RWPE1 (cell line): ENCODE measurements at regions of chr7 and their contacts with region 1.

Region 1: DNA sequence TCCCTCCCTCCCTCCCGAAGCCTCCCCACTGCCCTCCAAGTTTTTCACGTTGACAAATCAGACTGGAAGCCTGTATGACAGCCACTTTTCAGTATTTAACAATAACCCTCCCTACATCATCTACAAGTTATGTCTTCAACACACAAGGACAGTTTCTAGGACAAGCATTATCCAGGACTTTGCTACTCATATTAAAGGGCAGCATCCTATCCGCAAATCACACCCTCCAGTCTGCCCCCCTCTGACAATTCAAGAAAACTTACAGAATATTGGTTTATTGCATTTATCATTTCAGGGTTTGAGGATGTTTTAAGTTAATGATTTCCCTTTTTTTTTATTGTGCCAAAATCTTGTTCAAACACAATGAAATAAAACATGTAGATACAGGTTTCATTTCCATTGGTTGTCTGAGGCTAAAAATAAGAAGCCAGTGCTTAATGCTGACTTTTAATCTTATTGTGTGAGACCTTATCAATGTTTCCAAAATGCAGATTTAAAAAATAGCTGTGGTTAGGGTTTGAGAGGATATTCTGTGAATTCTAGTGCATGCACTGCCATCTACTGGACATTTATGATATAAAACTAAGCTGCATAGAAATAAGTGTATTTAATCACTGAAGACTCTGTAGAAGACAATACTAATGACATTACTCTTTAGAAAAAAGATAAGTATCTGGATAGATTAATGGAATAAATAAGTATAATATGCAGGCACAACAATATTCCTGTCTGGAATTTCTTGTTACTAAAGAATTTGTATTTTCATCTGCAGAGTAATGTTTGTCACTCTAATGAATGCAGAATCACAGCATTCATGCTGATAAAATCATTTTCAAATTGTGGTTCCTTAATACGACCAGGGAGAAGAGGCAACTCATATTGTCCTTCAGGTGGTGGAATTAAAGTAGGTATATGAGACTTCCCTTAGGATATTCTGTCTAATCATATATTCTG is 64.1 kb downstream of the CAV1 start:
- DNase-seq: peak; percentile 31
- H3K27ac ChIP-seq: no peak overlapping the region; the same call in 1 of the 2 replicates
- CTCF ChIP-seq: peak; percentile 84

Region 2: DNA sequence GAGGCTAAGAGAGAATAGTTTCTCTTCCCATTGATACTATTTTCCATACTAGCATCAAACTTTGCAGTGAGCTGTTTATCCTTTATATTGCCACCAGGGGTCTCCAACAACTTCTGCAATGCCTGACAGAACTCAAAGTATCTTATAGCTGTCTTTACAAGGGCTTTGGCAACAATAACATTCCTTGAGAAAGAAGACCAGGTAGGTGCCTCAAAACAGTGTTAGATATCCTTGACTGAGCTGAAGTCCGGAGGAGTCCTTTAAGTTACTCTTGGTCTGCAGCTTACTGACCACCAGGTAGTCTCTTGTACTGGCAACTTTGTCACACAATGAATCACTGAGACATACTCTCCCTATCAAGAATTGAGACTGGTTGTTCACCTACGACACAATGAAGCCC is 408.6 kb before region 1 on chr7:
- CTCF ChIA-PET with region 1: interaction called, 10 read pairs
- POLR2A ChIA-PET with region 1: no interaction called
- DNase-seq: peak; percentile 47
- H3K27ac ChIP-seq: no peak overlapping the region
- CTCF ChIP-seq: peak; percentile 89

Region 3: DNA sequence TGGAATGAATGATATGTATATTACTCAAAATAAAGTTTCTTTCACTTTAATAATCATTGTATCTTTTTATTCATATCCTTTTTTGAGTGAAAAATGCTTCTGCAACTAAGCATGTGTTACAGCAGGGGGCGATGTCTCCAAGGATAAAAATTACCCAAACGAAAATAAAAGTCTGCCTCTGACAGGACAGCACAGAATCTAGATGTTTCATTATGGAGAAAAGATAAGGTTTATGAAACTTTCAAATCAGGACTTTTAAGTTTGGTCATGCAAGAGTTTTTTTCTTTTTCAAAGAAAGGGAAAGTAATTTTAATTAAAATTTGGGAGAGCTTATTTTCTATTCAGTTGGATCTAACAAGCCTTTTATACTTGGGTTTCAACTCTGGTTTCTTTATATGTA is 330.2 kb before region 1 on chr7:
- CTCF ChIA-PET with region 1: interaction called, 15 read pairs
- POLR2A ChIA-PET with region 1: no interaction called
- DNase-seq: peak; percentile 50
- H3K27ac ChIP-seq: no peak overlapping the region
- CTCF ChIP-seq: peak; percentile 90

Region 4: DNA sequence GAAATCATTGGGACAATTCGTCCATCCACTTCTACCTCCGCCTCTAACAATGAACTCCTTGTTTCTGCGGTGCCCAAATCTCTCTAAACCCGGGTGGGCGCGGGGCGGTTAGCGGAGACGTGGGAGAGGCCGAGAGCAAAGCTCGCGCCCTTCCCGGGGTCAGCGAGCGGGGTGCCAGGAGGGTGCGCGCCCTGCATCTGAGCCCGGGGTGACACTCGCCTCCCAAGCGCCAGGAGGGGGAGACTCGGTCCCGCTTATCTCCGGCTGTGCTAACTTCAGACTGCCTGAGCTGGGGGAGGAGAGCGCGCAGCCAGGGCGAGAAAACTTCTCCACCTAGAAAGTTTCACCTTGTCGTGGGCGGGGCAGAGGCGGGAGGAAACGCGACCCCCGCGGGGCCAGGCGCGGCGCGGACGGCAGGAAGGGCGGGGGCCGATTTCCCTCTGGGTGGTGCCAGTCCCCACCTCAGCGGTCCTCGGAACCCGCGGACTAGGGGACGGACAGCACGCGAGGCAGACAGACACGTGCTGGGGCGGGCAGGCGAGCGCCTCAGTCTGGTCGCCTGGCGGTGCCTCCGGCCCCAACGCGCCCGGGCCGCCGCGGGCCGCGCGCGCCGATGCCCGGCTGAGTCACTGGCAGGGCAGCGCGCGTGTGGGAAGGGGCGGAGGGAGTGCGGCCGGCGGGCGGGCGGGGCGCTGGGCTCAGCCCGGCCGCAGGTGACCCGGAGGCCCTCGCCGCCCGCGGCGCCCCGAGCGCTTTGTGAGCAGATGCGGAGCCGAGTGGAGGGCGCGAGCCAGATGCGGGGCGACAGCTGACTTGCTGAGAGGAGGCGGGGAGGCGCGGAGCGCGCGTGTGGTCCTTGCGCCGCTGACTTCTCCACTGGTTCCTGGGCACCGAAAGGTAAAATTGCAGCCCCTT is 83.0 kb after region 1 on chr7 and contains the start of gene MET:
- CTCF ChIA-PET with region 1: interaction called, 10 read pairs
- POLR2A ChIA-PET with region 1: no interaction called
- DNase-seq: peak; percentile 85
- H3K27ac ChIP-seq: peak within 1 kb of the TSS; percentile 97
- CTCF ChIP-seq: peak; percentile 88